Prostate gland (tissue), 2 donors: ENCODE measurements at regions of chr7 and their contacts with region 1.

Region 1: DNA sequence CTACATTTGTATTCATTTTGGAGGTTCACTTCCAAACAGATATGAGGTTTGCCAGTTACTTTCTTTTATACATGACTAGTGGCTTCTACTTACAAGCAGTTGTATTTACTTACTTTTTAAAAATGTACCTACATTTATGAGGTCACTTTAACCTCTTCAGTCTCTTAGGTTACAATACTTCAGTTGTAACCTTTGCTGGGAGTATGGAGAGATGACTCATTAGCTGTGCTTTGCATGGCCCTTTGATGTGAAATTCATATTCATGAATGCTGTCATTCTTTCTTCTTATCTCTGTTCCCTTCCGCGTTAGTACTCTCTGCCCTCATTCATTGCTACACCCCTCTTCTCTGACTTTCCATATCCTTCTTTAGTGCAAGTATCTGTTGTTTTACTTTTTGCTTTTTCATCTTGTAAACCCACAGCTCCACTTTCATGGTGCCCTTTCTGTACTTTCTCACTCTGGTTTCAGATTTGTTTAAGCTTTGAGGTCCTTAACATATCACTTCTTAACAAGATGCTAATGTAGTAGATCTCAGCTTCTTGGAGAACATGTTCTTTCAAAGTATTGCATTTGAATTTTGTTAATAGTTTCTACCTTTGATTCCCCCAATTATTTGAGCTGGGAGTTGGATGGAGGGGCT is 164.4 kb downstream of the BMPER start:
- DNase-seq: no peak
- H3K4me3 ChIP-seq: no peak overlapping the region
- H3K27ac ChIP-seq: no peak overlapping the region
- H3K4me1 ChIP-seq: peaks cover 3% of the 10 kb centered on the region
- H3K27me3 ChIP-seq: no peaks in the 10 kb centered on the region
- CTCF ChIP-seq: no peak
- POLR2A ChIP-seq: no peak

Region 2: GRCh38 chr7:33921216-33921938 is 148.4 kb before region 1 on chr7:
- intact Hi-C with region 1: loop called (anchors 10 kb)
- DNase-seq: no peak
- H3K4me3 ChIP-seq: no peak overlapping the region
- H3K27ac ChIP-seq: no peak overlapping the region
- H3K4me1 ChIP-seq: no peaks in the 10 kb centered on the region
- H3K27me3 ChIP-seq: no peaks in the 10 kb centered on the region
- CTCF ChIP-seq: no peak
- POLR2A ChIP-seq: no peak